ENCODE measurements at regions of chr10 and their contacts with region 1.

Region 1: GRCh38 chr10:93554760-93555432 is 11.6 kb upstream of the FFAR4 start:
- DNase-seq: peak in 25 of 35 experiments; percentile 2 to 45 (median 12)
- ATAC-seq: peak in 1 of 4 experiments; percentile 36
- H3K4me3 ChIP-seq: no peak overlapping the region
- H3K4me3 Mint-ChIP-seq: no peak overlapping the region
- H3K27ac ChIP-seq: no peak overlapping the region
- H3K27ac Mint-ChIP-seq: no peak overlapping the region
- H3K4me1 ChIP-seq: no peaks in the 10 kb centered on the region
- H3K4me1 Mint-ChIP-seq: no peaks in the 10 kb centered on the region
- H3K27me3 ChIP-seq: peaks cover 0 to 10% of the 10 kb centered on the region in 2 experiments
- H3K27me3 Mint-ChIP-seq: peaks cover 6 to 12% of the 10 kb centered on the region in 2 donors

Region 2: DNA sequence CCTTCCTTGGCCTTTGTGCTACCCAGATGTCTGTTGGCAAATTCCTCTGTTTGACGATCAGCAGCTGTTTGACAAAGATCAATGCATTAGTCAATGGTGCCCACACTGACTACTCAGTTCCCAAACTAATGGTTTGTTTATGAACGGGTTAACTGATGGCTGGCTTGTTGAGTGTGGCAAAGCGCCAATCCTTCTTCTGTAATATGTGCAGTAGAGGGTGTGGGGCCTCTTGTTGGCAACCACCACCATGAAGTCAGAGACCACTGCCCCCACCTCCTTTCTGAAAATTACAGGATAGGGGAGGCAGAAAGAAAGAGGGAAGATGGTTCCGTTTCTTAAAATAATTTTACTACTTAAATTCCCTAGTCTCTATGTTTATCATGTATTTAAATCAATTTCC is 436.2 kb after region 1 on chr10:
- CTCF ChIA-PET with region 1: interaction called in 1 of 2 experiments, 10 read pairs
- POLR2A ChIA-PET with region 1: no interaction called
- DNase-seq: no peak
- ATAC-seq: no peak
- H3K4me3 ChIP-seq: no peak overlapping the region
- H3K4me3 Mint-ChIP-seq: no peak overlapping the region
- H3K27ac ChIP-seq: no peak overlapping the region
- H3K27ac Mint-ChIP-seq: no peak overlapping the region
- H3K4me1 ChIP-seq: peaks cover 0 to 3% of the 10 kb centered on the region in 2 experiments
- H3K4me1 Mint-ChIP-seq: peaks cover 0 to 6% (median 5%) of the 10 kb centered on the region in 3 donors
- H3K27me3 ChIP-seq: peaks cover 22 to 24% of the 10 kb centered on the region in 2 experiments
- H3K27me3 Mint-ChIP-seq: peaks cover 46 to 54% of the 10 kb centered on the region in 2 donors